Astrocyte of the cerebellum (primary cell): ENCODE measurements at regions of chr16 and their contacts with region 1.

Region 1: GRCh38 chr16:8963825-8964441 is at the start of gene USP7:
- DNase-seq: peak; percentile 78
- H3K4me3 ChIP-seq: peak within 1 kb of the TSS; percentile 80
- CTCF ChIP-seq: no peak

Region 2: GRCh38 chr16:8905168-8905762 is 58.7 kb before region 1 on chr16:
- in situ Hi-C with region 1: no loop called
- DNase-seq: no peak
- H3K4me3 ChIP-seq: no peak overlapping the region
- CTCF ChIP-seq: peak; percentile 72

Region 3: DNA sequence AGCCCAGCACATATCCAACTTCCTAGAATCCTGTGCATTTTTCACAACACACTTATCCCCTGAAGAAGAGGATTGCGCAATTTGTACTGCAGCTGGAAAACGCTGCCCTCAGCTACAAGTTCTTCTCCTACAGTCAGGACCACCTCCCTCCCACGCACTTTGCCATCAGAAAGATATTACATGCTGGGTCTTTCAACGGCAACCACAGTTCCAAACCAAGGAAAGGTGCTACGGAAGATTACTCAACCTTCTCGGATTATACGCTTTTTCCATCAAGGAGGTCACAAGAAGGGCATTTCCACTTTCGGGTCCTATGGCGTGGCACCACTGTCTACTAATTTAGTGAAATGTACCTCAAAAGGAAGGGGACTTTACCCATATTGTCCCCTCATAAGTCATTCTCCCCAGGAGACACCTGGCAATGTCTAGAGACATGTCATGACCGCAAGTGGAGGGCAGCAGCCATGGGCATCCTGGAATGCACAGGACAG is 35.4 kb before region 1 on chr16:
- in situ Hi-C with region 1: loop called (anchors 5 kb)
- DNase-seq: no peak
- H3K4me3 ChIP-seq: no peak overlapping the region
- CTCF ChIP-seq: no peak

Region 4: GRCh38 chr16:8998114-8998513 is 34.2 kb after region 1 on chr16:
- in situ Hi-C with region 1: no loop called
- DNase-seq: no peak
- H3K4me3 ChIP-seq: no peak overlapping the region
- CTCF ChIP-seq: no peak

Region 5: DNA sequence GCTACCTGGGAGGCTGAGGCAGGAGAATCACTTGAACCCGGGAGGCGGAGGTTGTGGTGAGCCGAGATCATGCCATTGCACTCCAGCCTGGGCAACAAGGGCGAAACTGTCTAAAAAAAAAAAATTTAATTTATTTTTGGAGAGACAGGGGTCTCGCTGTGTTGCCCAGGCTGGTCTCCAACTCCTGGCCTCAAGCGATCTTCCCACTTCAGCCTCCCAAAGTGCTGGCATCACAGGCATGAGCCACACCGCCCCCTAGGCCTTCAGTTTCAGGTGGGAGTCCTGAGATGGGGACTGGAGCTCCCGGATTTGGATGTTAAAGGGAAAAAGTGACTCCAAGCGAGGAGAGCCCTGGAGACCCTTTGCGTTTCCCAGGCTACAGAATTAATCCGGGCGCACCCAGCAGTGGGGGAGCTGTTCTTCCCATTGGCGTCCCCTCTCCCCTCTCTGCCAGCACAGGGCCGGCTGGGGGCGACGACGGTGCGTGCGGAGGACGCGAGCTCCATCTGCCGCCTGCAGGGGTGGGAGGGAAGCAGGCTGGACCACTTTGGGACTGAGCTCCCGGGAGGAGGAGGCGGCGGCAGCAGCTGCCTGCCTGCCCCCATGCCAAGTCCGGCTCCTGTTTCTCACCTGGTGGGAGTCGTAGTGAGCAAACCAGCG is 49.0 kb after region 1 on chr16:
- in situ Hi-C with region 1: loop called (anchors 5 kb)
- DNase-seq: no peak
- H3K4me3 ChIP-seq: no peak overlapping the region
- CTCF ChIP-seq: peak; percentile 23

Region 6: GRCh38 chr16:9047686-9048301 is 83.9 kb after region 1 on chr16:
- in situ Hi-C with region 1: loop called (anchors 5 kb)
- DNase-seq: peak; percentile 99
- H3K4me3 ChIP-seq: no peak overlapping the region
- CTCF ChIP-seq: no peak